Common myeloid progenitor, CD34-positive (primary cell): ENCODE measurements at regions of chr14 and their contacts with region 1.

Region 1: GRCh38 chr14:22221508-22221907 is 367.5 kb downstream of the DAD1 start:
- DNase-seq: peak; percentile 56 to 80 (median 77)
- H3K4me3 ChIP-seq: no peak overlapping the region
- H3K27ac ChIP-seq: no peak overlapping the region
- H3K4me1 ChIP-seq: peaks cover 2 to 17% (median 7%) of the 10 kb centered on the region in 4 experiments
- H3K27me3 ChIP-seq: no peaks in the 10 kb centered on the region

Region 2: GRCh38 chr14:22163051-22163450 is 58.5 kb before region 1 on chr14:
- CTCF ChIA-PET with region 1: interaction called, 10 read pairs
- POLR2A ChIA-PET with region 1: no interaction called
- DNase-seq: peak; percentile 46 to 66 (median 60)
- H3K4me3 ChIP-seq: no peak overlapping the region
- H3K27ac ChIP-seq: no peak overlapping the region
- H3K4me1 ChIP-seq: peaks cover 12 to 26% (median 16%) of the 10 kb centered on the region in 4 experiments
- H3K27me3 ChIP-seq: peaks cover 0 to 13% (median 3%) of the 10 kb centered on the region in 5 experiments

Region 3: GRCh38 chr14:22252686-22253085 is 31.2 kb after region 1 on chr14:
- CTCF ChIA-PET with region 1: interaction called, 13 read pairs
- POLR2A ChIA-PET with region 1: no interaction called
- DNase-seq: peak; percentile 61 to 92 (median 87)
- H3K4me3 ChIP-seq: peak overlapping the region in 2 of 7 experiments; percentile 38 to 45
- H3K27ac ChIP-seq: peak overlapping the region; percentile 18 to 38
- H3K4me1 ChIP-seq: peaks cover 5 to 7% (median 6%) of the 10 kb centered on the region in 4 experiments
- H3K27me3 ChIP-seq: no peaks in the 10 kb centered on the region

Region 4: DNA sequence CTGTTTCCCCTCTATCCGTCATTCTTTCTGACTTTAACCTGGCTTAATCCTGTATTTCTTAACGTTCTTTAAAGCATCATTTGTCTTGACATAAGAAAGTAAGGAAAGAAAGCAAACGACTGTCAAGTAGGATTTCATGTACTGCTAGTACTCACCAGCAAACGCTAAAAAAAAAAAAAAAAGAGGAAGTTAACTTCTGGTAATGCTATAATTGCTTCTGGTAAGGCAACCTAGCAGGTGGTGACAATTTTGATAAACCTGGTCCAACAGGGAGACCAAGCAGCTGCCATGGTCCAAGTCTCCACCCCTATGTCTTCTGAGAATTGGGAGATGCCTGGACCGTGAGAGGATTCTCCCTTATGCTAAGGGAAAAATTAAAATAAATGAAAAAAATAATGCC is 60.9 kb after region 1 on chr14:
- CTCF ChIA-PET with region 1: interaction called, 20 read pairs
- POLR2A ChIA-PET with region 1: no interaction called
- DNase-seq: peak; percentile 46 to 88 (median 82)
- H3K4me3 ChIP-seq: peak overlapping the region in 1 of 7 experiments; percentile 33
- H3K27ac ChIP-seq: no peak overlapping the region
- H3K4me1 ChIP-seq: peaks cover 0 to 30% (median 25%) of the 10 kb centered on the region in 4 experiments
- H3K27me3 ChIP-seq: no peaks in the 10 kb centered on the region

Region 5: DNA sequence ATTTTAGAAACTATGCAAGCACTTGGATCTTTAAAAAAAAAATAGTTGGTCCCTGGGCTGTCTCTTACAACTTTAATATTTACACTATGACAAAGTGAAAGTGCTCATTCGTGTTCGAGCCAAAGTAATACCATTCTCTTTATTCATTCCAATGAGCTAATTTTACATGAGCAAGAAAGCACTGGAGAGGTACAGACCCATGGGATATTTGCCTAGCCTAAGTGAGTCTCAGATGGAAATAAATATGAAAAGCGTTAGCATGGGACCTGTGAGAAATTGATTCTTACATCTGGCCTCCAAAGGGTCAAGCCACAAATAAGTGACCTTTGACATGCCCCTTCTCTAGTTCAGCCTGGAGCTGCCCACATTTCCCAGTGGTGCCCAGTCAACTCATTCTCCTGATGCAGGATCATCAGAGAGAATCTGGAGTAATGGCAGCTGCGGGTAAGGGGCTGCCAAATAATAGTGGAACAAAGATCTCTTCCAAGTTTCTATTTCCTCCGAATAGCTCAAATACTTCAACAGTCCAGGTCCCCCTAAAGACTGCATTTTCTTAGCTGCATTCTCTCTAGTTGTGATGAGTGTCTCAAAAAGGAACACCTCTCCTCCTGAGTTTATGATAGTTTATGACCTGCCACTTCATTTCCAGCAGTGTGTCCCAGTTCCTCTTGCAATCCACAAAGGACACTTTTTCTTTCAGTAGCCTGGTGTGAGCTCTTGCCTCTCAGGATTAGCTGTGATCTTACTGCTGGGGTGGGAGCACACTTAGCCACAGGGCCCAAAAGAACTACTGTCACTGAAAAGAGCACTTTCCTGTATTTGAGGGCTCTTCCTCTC is 159.3 kb after region 1 on chr14:
- CTCF ChIA-PET with region 1: interaction called, 52 read pairs
- POLR2A ChIA-PET with region 1: no interaction called
- DNase-seq: no peak
- H3K4me3 ChIP-seq: no peak overlapping the region
- H3K27ac ChIP-seq: no peak overlapping the region
- H3K4me1 ChIP-seq: peaks cover 0 to 10% (median 7%) of the 10 kb centered on the region in 4 experiments
- H3K27me3 ChIP-seq: no peaks in the 10 kb centered on the region